ENCODE measurements at regions of chr17 and their contacts with region 1.

Region 1: DNA sequence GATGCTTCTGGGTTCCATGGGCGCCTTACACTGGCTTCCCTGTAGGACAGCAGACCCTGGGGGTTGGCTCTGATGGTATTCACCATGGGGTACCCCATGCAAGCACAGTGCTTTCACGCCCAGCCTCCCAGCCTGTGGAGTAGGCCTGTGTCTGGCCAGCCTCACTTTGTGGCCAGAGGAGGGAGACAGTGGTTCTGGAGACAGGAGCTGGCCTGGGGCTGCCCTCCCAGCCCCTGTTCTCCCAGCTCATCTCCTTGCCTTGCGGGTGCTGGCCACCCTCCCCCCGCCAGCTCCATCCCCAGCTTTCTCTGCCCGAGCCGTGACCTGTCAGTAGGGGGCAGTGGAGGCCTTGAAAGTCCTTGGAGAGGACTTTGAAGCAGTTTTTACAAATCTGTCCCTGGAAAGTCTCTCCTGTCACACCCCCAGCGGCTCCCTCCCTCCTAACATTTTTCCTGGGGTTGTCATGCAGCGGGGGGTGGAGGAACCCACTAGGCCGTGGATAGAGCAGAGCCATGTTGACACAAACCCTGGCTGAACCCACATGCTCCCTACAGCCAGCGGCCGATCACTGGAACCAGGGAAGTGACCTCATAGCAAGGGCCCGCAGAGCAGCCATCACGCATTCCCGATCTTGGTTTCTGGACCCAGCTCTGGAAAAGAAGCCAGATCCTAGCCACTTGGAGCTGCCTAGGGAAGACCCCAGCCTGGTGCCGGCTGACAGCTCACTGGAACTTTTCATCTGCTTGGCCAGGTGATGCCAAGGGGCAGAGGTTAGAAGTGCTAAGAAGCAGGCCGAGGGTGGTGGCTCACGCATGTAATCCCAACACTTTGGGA is 289.4 kb downstream of the SEC14L1 start:
- DNase-seq: peak; percentile 89
- ATAC-seq: peak; percentile 34
- H3K4me3 Mint-ChIP-seq: no peak overlapping the region
- H3K27ac Mint-ChIP-seq: peak overlapping the region; percentile 91
- H3K4me1 Mint-ChIP-seq: peaks cover 83% of the 10 kb centered on the region
- H3K27me3 Mint-ChIP-seq: no peaks in the 10 kb centered on the region
- CTCF ChIP-seq: peak; percentile 89

Region 2: DNA sequence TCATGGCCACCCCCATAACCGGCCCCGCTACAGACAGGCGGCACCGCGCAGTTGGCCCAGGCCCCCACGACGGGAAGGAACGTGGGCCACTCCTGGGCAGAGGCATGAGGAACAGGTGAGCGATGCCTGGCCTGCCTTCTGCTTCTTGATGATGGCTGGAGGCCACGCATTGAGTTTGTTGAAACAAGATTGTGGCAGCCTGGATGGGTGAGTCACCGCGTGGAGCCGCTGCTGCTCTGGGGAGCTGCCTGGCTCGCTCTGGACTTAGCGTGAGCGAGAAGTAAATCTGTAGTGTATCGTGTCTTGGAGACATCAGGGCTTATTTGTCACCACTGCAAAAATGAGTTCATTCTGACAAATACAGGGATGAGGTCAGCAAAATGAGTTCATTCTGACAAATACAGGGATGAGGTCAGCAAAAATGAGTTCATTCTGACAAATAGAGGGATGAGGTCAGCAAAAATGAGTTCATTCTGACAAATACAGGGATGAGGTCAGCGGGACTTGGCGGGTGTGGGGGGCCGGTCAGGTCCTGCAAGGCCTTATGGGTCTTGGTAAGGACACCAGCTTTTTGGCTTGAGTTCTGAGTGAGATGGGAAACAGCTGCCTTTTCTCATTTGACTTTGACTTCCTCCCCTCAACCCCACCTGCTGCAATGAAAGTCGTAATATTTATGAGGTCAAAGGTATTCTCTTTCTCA is 196.4 kb before region 1 on chr17:
- CTCF ChIA-PET with region 1: no interaction called
- POLR2A ChIA-PET with region 1: no interaction called
- intact Hi-C with region 1: no loop called
- DNase-seq: peak; percentile 49
- ATAC-seq: peak; percentile 63
- H3K4me3 Mint-ChIP-seq: no peak overlapping the region
- H3K27ac Mint-ChIP-seq: peak overlapping the region; percentile 15
- H3K4me1 Mint-ChIP-seq: peaks cover 16% of the 10 kb centered on the region
- H3K27me3 Mint-ChIP-seq: no peaks in the 10 kb centered on the region
- CTCF ChIP-seq: no peak

Region 3: DNA sequence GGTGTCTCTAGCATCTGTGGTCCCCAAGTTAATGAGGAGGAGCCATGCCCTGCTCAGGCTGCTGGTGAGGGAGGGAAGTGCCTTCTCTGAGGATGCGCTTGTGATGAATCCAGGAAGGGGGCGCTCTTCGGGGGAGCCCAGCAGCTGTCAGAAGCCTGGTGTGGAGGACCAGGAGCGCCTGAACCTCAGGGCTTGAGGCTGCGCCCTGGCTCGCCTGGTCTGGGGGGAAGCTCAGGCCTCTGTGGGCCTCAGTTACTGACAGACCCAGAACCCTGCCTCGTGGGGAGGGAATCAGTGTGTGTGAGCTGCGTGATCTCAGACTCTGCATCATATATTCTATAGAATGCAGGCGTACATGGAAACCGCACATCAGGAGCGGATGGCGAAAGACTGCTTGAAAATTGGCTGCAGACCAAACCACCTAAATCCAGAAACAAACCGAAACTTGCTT is 163.2 kb before region 1 on chr17:
- CTCF ChIA-PET with region 1: no interaction called
- POLR2A ChIA-PET with region 1: no interaction called
- intact Hi-C with region 1: no loop called
- DNase-seq: peak; percentile 37
- ATAC-seq: peak; percentile 61
- H3K4me3 Mint-ChIP-seq: no peak overlapping the region
- H3K27ac Mint-ChIP-seq: no peak overlapping the region
- H3K4me1 Mint-ChIP-seq: no peaks in the 10 kb centered on the region
- H3K27me3 Mint-ChIP-seq: no peaks in the 10 kb centered on the region
- CTCF ChIP-seq: no peak

Region 4: GRCh38 chr17:77391668-77392375 is 38.3 kb before region 1 on chr17:
- CTCF ChIA-PET with region 1: interaction called, 12 read pairs
- POLR2A ChIA-PET with region 1: interaction called, 4 read pairs
- intact Hi-C with region 1: no loop called
- DNase-seq: peak; percentile 84
- ATAC-seq: peak; percentile 62
- H3K4me3 Mint-ChIP-seq: peak overlapping the region; percentile 81
- H3K27ac Mint-ChIP-seq: peak overlapping the region; percentile 85
- H3K4me1 Mint-ChIP-seq: peaks cover 68% of the 10 kb centered on the region
- H3K27me3 Mint-ChIP-seq: no peaks in the 10 kb centered on the region
- CTCF ChIP-seq: no peak

Region 5: DNA sequence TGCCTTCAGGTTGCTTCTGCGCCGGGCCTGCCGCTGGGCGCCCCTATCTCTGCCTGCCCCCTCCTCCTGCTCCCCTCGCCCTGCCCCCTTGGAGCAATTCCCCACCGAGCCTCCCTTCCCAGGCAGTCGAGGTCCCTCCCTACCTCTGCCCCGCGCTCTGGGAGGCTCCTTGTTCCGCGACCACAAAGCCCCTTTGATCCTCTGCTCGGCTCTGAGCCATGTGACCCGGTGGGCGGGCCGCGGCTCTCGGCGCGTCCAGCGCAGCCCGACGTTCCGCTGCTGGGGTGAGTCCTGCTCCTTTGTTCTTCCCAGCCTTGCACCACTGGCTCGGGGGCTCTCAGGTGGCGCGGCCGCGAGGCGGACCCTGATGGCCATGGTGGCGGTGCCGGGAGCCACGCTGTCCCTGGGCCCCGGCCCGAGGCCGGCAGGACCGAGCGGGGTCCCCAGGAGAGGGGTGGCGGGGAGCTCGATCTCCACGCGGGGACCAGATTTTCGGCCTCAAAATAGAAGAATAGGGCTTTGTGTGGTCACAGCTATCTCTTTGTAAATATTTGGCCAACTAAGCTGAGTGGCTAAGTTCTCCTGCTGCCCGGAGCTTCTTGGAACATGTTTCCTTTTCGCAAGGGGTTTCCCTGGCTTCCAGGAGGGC is 21.2 kb after region 1 on chr17:
- CTCF ChIA-PET with region 1: interaction called, 70 read pairs
- POLR2A ChIA-PET with region 1: interaction called, 410 read pairs
- intact Hi-C with region 1: no loop called
- DNase-seq: peak; percentile 84
- ATAC-seq: peak; percentile 19
- H3K4me3 Mint-ChIP-seq: peak overlapping the region; percentile 84
- H3K27ac Mint-ChIP-seq: peak overlapping the region; percentile 96
- H3K4me1 Mint-ChIP-seq: peaks cover 30% of the 10 kb centered on the region
- H3K27me3 Mint-ChIP-seq: no peaks in the 10 kb centered on the region
- CTCF ChIP-seq: no peak

Region 6: DNA sequence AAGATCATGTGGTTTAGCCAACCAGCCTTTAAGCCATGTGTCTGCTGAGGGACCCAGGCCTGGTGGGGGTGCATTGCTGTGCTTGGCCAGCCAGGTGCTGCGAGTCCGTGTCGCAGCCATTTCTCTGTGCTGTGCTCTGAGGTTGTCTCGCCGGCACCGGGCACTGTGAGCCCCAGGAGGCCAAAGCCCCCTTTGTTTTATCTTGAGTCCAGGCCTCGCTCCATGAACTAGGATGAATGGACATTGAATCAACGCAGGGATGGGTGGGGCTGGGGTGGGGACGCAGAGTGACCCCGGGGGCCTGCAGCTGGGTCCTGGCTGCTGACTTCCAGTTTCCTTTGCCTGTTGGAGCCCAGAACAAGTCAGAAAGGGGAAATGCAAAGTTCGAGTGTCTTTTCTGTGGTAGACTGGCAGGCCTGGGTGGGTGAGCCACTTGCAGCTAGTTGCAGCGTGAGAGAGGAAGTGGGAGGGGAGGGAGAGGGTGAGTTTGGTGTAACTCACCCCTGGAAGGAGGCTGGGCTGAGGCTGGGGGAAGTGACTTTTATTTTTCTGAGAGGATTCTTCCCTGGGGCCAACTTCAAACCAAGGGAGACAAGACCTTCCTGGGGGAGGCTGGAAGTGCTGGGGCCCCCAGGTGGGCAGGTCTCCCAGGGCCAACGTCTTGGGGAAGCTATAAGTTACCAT is 35.4 kb after region 1 on chr17:
- CTCF ChIA-PET with region 1: interaction called, 47 read pairs
- POLR2A ChIA-PET with region 1: interaction called, 410 read pairs
- intact Hi-C with region 1: loop called (anchors 5 kb)
- DNase-seq: peak; percentile 91
- ATAC-seq: peak; percentile 81
- H3K4me3 Mint-ChIP-seq: peak overlapping the region; percentile 60
- H3K27ac Mint-ChIP-seq: peak overlapping the region; percentile 89
- H3K4me1 Mint-ChIP-seq: peaks cover 82% of the 10 kb centered on the region
- H3K27me3 Mint-ChIP-seq: no peaks in the 10 kb centered on the region
- CTCF ChIP-seq: no peak

Region 7: DNA sequence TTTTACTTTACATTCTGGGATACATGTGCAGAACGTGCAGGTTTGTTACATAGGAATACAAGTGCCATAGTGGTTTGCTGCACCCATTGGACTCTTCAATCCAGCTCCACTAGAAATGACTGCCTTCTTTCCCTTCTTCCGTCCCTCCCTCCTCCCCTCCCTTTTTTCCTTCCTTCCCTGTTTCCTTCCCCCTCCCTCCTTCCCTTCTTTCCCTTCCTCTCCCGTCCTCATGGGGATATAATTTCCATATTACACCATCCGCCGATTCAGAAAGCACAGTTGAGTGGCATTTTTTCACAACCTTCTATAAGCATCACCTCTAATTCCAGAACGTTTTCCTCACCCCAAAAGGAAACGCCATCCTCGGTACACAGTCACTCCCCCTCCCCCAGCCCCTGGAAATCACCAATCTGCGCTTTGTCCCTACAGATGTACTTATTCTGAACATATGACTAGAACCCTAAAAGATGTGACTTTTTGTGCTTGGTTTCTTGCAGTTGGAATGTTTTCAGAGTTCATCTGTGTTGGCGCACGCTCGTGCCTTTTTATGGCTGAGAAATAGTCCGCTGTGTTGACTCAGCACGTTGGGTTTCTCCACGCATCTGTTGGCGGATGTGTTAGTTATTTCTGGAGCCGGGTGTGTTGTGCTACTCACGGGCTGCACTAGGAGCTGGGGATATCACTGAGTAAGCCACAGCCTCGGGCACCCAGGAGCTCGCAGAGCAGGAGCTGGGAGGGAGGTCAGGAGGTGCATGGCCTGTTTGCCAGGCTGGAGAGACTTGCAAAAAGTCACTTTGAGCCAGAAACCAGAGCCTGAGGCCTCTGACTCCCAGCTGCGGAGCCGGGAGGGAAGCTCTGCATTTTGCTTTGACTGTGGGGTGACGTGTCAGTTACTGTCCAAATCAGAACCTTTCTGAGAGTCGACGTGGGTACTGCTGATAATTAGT is 47.1 kb after region 1 on chr17:
- CTCF ChIA-PET with region 1: interaction called, 47 read pairs
- POLR2A ChIA-PET with region 1: interaction called, 53 read pairs
- intact Hi-C with region 1: loop called (anchors 5 kb)
- DNase-seq: peak; percentile 62
- ATAC-seq: no peak
- H3K4me3 Mint-ChIP-seq: peak overlapping the region; percentile 28
- H3K27ac Mint-ChIP-seq: peak overlapping the region; percentile 53
- H3K4me1 Mint-ChIP-seq: peaks cover 81% of the 10 kb centered on the region
- H3K27me3 Mint-ChIP-seq: no peaks in the 10 kb centered on the region
- CTCF ChIP-seq: no peak

Region 8: DNA sequence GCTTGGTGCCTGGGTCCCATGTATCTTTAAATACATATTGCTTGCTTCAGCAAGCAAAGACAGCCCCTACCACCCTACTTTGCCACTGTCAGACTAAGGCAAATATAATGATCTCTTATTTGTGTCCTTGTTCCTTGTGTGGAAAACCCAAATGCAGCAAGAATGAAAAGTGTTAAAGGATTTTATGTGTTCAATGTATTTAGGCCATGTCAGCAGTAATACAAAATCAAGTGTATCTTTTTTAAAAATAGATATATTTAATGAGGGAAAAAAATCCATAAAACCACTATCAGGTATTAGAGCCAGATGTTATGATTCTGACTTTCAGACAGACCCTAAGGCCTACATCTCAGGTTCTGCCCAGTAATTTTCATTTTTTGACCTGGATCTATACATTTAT is 85.1 kb after region 1 on chr17:
- CTCF ChIA-PET with region 1: no interaction called
- POLR2A ChIA-PET with region 1: no interaction called
- intact Hi-C with region 1: no loop called
- DNase-seq: no peak
- ATAC-seq: no peak
- H3K4me3 Mint-ChIP-seq: no peak overlapping the region
- H3K27ac Mint-ChIP-seq: no peak overlapping the region
- H3K4me1 Mint-ChIP-seq: no peaks in the 10 kb centered on the region
- H3K27me3 Mint-ChIP-seq: no peaks in the 10 kb centered on the region
- CTCF ChIP-seq: no peak